ENCODE measurements at regions of chr12 and their contacts with region 1.

Region 1: DNA sequence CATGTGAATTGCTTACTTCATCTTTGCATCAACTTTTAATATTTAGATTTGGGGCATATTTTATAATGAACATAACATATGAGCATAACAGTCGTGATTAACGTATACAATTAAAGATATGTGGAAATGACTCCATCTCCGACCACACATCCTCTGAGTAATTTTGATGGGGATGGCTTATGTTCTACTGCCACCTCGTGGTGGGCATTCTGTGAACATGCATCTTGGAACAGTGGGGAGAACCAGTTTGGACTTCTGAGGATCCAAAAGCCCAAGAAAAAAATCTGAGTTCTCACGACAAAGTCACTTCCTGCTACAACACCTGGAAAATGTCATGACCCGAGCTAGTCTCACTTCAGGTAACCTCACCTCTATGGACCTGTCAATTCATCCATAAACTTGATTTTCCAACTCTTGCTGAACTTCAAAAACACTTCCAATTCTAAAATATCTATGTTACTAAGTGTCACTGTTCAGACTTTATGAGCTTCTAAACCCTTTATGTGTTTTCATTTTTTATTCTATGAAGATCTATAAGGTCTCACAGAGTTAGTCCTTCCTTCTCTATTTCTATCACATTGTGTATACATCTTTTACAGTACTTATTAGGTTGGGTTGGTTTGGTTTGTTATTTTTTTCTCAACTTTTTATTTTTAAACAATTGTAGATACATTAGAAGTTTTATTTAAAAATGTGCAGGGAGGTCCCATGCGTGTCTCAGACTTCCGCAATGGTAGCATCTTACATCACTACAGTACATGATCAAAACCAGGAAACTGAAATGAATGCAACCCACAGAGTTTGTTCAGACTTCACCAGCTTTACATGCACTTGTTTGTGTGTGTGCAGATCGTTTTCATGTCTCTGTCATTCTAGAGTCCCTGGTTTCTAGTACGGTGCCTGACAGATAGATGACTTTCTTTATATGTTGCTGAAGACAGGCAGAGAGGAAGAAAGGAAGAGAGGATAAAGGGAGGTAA is 38.2 kb upstream of the STAB2 start:
- DNase-seq: peak; percentile 95
- ATAC-seq: peak; percentile 56
- H3K4me3 ChIP-seq: no peak overlapping the region
- H3K27ac ChIP-seq: no peak overlapping the region
- H3K4me1 ChIP-seq: peaks cover 24% of the 10 kb centered on the region
- H3K27me3 ChIP-seq: no peaks in the 10 kb centered on the region
- CTCF ChIP-seq: peak; percentile 98

Region 2: DNA sequence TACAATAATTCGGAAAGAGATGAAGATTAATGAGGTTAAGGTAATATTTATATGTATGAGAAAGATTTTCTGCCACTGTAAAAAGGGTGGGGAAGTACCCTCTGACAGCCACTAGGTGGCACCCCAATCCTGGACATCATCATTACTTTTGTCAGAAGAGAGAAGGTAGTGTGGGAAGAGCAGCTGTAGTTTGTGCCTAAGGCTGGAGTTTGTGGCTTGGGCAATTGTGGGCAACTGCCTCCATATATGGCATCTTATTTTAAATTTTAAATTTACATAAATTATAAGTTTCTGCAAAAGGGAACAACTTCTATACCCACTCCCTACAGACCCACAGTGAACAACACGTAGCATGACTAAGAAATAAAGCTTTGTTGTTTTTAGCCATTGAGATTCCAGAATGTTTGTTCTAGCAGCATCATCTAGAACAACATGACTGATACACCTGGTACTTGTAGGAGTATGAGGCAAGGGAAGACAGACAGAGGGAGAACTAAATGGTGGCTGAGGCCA is 1775.2 kb before region 1 on chr12:
- CTCF ChIA-PET with region 1: no interaction called
- POLR2A ChIA-PET with region 1: no interaction called
- intact Hi-C with region 1: loop called (anchors 5 kb)
- DNase-seq: peak; percentile 81
- ATAC-seq: peak; percentile 84
- H3K4me3 ChIP-seq: no peak overlapping the region
- H3K27ac ChIP-seq: no peak overlapping the region
- H3K4me1 ChIP-seq: no peaks in the 10 kb centered on the region
- H3K27me3 ChIP-seq: no peaks in the 10 kb centered on the region
- CTCF ChIP-seq: peak; percentile 95

Region 3: GRCh38 chr12:102484428-102484958 is 1064.4 kb before region 1 on chr12:
- CTCF ChIA-PET with region 1: no interaction called
- POLR2A ChIA-PET with region 1: no interaction called
- intact Hi-C with region 1: loop called (anchors 5 kb)
- DNase-seq: peak; percentile 68
- ATAC-seq: peak; percentile 49; the same call in 1 of the 2 replicates
- H3K4me3 ChIP-seq: peak overlapping the region; percentile 52
- H3K27ac ChIP-seq: no peak overlapping the region
- H3K4me1 ChIP-seq: no peaks in the 10 kb centered on the region
- H3K27me3 ChIP-seq: 0 out of 2 replicates have a peak, but pooled peaks cover 2% of the 10 kb centered on the region
- CTCF ChIP-seq: peak; percentile 96

Region 4: DNA sequence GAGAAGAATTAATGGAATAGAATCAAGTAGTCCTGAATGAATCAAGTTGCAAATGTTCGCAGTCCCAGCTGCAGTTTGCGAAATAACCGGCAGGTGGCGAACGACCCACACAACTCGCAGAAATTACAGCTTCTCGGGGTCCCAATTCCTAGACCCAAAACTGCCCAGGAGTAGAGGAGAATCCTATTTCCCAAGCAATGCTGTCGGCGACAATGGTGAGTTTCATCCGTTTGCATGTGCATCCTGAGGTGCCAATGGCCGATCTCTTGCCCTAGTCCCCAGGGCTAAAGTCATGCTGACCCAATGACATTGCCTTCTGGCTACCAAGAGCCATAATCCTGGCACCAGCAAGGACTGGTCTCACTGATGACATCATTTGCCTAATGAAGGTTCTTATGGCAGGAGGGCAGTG is 600.0 kb before region 1 on chr12:
- CTCF ChIA-PET with region 1: interaction called, 3 read pairs
- POLR2A ChIA-PET with region 1: no interaction called
- intact Hi-C with region 1: loop called (anchors 1 kb)
- DNase-seq: peak; percentile 64
- ATAC-seq: no peak
- H3K4me3 ChIP-seq: no peak overlapping the region
- H3K27ac ChIP-seq: no peak overlapping the region
- H3K4me1 ChIP-seq: no peaks in the 10 kb centered on the region
- H3K27me3 ChIP-seq: peaks cover 22% of the 10 kb centered on the region
- CTCF ChIP-seq: peak; percentile 96

Region 5: DNA sequence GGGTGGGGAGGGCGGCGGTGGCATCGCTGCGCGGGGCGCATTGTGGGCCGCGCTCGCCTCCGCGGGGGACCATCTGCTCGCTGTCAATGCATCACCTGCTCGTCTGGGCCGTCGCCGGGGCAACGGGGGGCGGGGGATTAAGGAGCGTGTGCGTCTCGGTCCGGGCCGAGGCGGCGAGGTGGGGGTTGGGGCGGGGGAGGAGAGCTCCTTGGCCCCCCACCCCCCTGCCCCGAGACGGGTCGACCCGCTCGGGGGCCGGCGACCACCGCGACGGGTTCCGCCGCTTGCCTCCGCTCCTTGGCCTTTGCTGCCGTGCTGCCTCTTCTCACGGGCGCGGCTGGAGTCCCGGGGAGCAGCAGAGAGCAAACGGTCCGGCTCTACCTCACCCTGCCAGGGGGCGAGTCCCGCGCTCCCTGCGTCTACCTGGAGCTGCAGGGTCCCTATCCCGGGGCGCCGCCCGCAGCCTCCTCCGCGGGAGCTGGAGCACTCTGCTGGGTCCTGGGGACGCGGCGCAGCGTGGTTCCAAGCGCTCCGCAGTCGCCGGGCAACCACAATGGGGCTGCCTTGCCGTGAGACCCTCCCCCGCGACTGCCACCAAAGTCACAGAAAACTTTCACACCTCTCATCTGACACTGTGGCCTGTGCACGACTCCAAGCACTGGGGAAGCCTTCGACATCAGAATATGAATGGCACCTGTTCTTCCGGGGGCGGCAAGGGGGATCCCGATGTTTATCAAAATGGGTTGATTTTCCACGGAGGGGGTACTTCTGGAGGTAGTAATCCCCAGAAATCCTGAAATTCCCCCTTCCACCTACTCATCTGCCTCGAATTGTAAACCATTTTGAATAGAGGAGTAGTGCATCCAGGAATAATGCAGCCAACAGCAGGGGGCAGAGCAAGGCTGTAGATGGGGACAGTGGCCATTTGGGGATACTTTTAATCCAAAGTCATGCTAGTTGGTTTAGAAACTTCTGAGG is 53.1 kb before region 1 on chr12 and contains the start of gene C12orf42:
- CTCF ChIA-PET with region 1: interaction called, 7 read pairs
- POLR2A ChIA-PET with region 1: no interaction called
- intact Hi-C with region 1: loop called (anchors 1 kb)
- DNase-seq: peak; percentile 76
- ATAC-seq: peak; percentile 81
- H3K4me3 ChIP-seq: peak within 1 kb of the TSS; percentile 65
- H3K27ac ChIP-seq: no peak within 1 kb of the TSS
- H3K4me1 ChIP-seq: peaks cover 15% of the 10 kb centered on the region
- H3K27me3 ChIP-seq: peaks cover 29% of the 10 kb centered on the region
- CTCF ChIP-seq: peak; percentile 91
- total RNA-seq, gene C12orf42: not detected in 2 replicates

Region 6: DNA sequence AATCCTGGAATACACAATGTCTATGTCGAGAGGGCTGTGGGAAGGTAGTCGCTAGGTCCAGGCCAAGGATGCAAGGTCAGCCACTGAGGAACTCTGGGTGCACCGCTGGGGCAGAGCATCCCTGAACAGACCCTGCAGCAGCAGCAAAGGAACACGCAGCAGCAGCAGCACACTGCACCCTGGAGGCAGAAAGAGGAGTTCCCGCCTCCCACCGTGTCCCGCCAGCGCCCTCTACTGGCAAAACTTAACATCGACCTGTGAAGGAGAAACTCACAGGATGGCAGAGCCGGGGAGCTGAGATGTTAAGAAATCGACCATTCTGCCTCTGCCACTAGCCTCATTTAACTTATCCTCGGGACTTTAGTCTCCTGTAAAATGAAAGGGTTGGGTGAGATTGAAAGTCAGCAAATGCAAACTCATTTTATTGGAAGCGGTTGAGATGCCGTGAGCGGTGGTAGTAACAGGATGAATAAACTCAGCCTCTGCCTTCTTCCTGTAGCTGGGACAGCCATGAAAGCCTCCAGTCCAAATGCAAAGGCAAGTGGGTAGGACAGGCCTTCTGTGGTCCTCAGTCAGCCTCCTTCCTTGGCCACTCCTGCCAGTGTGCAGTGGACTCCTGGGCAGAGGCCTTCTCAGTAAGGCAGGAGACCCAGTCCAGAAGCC is 83.8 kb after region 1 on chr12:
- CTCF ChIA-PET with region 1: no interaction called
- POLR2A ChIA-PET with region 1: no interaction called
- intact Hi-C with region 1: no loop called
- DNase-seq: peak; percentile 93
- ATAC-seq: peak; percentile 88
- H3K4me3 ChIP-seq: no peak overlapping the region
- H3K27ac ChIP-seq: no peak overlapping the region
- H3K4me1 ChIP-seq: peaks cover 3% of the 10 kb centered on the region; the same call in 1 of the 2 replicates
- H3K27me3 ChIP-seq: peaks cover 24% of the 10 kb centered on the region
- CTCF ChIP-seq: peak; percentile 100

Region 7: DNA sequence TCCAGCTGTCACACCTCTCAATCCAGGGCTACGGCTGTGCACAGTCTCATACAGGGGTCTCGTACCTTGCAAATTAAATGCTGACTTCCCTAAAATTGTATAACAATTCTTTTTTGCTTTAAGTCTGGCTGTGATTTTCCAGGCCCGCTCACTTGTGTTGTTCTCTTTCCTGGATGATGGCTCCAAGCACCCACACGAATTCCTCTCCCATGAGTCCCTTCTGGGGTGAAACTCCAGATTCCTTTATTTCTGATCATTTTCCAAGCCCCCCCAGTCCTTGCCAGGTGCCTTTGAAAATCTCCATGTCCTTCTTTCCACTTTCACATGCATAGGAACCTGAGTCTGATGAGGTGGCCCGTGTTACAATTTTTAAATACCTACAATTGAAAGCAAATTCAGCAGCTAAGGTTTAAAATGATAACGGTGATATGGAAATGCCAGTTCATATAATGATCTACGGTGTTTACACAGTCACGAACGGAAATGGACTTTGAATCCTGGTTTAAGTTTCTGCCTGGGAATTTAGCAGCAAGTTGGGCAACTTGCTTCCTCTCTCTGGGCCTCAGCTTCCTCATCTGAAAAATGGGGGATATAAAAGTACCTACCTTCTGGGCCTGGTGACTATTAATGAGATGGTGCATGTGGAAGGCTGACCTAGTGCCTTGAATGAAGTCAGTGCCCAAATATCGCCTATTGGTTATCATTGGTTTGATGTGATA is 123.6 kb after region 1 on chr12:
- CTCF ChIA-PET with region 1: no interaction called
- POLR2A ChIA-PET with region 1: no interaction called
- intact Hi-C with region 1: no loop called
- DNase-seq: peak; percentile 6
- ATAC-seq: no peak
- H3K4me3 ChIP-seq: no peak overlapping the region
- H3K27ac ChIP-seq: no peak overlapping the region
- H3K4me1 ChIP-seq: peaks cover 5% of the 10 kb centered on the region; the same call in 1 of the 2 replicates
- H3K27me3 ChIP-seq: peaks cover 8% of the 10 kb centered on the region; the same call in 1 of the 2 replicates
- CTCF ChIP-seq: no peak